Transverse colon (tissue), 4 donors: ENCODE measurements at regions of chr19 and their contacts with region 1.

Region 1: DNA sequence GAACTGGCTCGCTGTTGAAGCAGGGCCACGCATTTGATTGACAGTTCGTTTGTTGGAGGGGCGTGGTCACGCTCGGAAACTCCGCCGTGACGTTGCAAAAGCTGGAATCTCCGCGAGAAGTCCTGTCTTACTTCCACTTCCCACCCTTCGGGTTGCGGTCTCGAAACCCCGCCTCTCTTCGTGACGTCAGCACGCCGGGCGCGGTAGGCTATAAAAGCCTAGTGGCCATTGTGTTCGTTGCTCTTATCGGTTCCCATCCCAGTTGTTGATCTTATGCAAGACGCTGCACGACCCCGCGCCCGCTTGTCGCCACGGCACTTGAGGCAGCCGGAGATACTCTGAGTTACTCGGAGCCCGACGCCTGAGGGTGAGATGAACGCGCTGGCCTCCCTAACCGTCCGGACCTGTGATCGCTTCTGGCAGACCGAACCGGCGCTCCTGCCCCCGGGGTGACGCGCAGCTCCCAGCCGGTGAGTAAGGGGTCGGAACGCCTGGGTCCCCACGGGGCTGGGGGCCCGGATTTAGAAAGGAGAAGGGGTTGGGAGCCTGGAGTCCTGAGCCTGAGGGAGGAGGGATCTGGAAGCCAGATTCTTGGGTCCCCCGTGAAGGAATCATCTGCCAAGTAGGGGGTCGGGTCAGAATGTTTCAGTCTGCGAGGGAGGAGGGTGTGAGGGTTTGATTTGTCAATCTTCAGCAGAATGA is at the start of gene PPP1R15A:
- DNase-seq: peak; percentile 99
- H3K4me3 ChIP-seq: peak within 1 kb of the TSS; percentile 75 to 98 (median 88)
- H3K27ac ChIP-seq: peak within 1 kb of the TSS; percentile 100
- H3K4me1 ChIP-seq: peaks cover 24 to 60% (median 47%) of the 10 kb centered on the region in 4 donors
- H3K27me3 ChIP-seq: no peaks in the 10 kb centered on the region
- CTCF ChIP-seq: peak in 2 of 5 experiments; percentile 54 to 64
- EP300 ChIP-seq: peak; percentile 68
- POLR2A ChIP-seq: peak; percentile 100
- total RNA-seq, gene PPP1R15A: 49.4 to 109 (median 69.5) TPM

Region 2: DNA sequence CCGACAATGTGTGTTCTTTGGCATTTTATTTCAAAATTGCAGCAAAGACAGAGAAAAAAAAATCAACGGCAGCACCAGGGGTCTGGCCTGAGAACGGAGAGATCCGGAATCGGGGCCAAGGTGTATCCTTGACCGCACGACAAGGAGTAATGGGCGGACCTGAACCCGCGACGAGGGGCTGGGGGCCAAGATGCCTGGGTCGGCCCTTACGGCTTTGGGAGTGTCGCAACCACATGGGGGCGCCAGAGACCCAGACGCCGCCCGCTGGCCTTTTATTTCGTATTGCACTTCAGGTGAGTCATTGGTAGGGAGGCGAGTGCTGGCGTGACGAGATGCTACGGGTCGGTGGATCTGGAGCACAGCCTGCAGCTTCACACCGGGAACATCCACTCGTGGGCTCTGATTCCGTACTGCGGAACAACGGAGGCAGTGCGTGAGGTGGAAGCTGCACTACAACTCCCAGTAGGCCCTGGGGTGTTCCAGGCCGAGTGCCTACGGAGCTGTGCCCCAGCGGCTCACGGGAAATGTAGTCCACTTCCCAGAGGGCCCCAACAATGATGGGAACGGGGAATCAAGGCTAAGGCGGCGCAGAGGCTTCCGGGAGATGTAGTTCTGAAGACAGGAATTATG is 77.2 kb before region 1 on chr19:
- in situ Hi-C with region 1: no loop called
- intact Hi-C with region 1: no loop called
- DNase-seq: peak; percentile 91
- H3K4me3 ChIP-seq: peak overlapping the region in 3 of 4 donors; percentile 24 to 56 (median 41)
- H3K27ac ChIP-seq: peak overlapping the region; percentile 72 to 88 (median 78)
- H3K4me1 ChIP-seq: peaks cover 0 to 15% (median 10%) of the 10 kb centered on the region in 4 donors
- H3K27me3 ChIP-seq: no peaks in the 10 kb centered on the region
- CTCF ChIP-seq: peak; percentile 92 to 99 (median 97)
- EP300 ChIP-seq: no peak
- POLR2A ChIP-seq: peak; percentile 24

Region 3: DNA sequence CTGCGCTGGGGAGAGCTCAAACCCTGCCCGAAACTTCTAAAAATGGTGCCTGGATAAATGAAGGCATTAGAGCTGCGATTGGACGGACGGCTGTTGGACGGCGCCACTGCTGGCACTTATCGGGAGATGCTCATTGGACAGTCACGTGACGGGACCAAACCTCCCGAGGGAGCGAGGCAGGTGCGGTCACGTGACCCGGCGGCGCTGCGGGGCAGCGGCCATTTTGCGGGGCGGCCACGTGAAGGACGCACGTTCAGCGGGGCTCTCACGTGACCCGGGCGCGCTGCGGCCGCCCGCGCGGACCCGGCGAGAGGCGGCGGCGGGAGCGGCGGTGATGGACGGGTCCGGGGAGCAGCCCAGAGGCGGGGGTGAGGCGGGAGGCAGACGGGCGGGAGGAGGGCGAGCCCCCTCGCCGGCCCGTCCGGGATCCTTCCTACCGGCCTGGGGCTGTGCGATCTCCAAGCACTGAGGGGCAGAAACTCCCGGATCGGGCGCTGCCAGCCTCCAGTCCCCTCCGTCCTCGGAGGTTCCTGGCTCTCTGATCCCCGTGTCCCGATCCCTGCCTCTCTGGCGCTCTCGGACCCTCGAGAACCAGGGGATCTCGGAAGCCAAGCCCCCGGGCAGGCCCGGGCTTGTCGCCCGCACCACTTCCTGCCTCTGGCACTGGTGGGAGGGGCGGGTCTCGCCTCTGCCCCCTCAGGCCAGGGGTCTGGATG is 82.4 kb after region 1 on chr19 and contains the start of gene BAX:
- in situ Hi-C with region 1: loop called in 2 of 4 experiments (anchors 10 to 25 kb)
- intact Hi-C with region 1: no loop called
- DNase-seq: peak; percentile 98
- H3K4me3 ChIP-seq: peak within 1 kb of the TSS; percentile 76 to 99 (median 94)
- H3K27ac ChIP-seq: peak within 1 kb of the TSS; percentile 87 to 93 (median 90)
- H3K4me1 ChIP-seq: peaks cover 7 to 17% (median 16%) of the 10 kb centered on the region in 4 donors
- H3K27me3 ChIP-seq: no peaks in the 10 kb centered on the region
- CTCF ChIP-seq: peak in 2 of 5 experiments; percentile 12 to 23
- EP300 ChIP-seq: no peak
- POLR2A ChIP-seq: peak; percentile 56
- total RNA-seq, gene BAX: 74.5 to 152 (median 112) TPM

Region 4: GRCh38 chr19:48982280-48982679 is 109.9 kb after region 1 on chr19:
- in situ Hi-C with region 1: no loop called
- intact Hi-C with region 1: no loop called
- DNase-seq: no peak
- H3K4me3 ChIP-seq: no peak overlapping the region
- H3K27ac ChIP-seq: no peak overlapping the region
- H3K4me1 ChIP-seq: peaks cover under 1 to 8% (median 4%) of the 10 kb centered on the region in 4 donors
- H3K27me3 ChIP-seq: no peaks in the 10 kb centered on the region
- CTCF ChIP-seq: no peak
- EP300 ChIP-seq: no peak
- POLR2A ChIP-seq: no peak

Region 5: GRCh38 chr19:49106648-49107135 is 234.4 kb after region 1 on chr19:
- in situ Hi-C with region 1: no loop called
- intact Hi-C with region 1: no loop called
- DNase-seq: peak; percentile 61
- H3K4me3 ChIP-seq: no peak overlapping the region
- H3K27ac ChIP-seq: no peak overlapping the region
- H3K4me1 ChIP-seq: peaks cover 0 to 4% (median 0%) of the 10 kb centered on the region in 4 donors
- H3K27me3 ChIP-seq: no peaks in the 10 kb centered on the region
- CTCF ChIP-seq: peak; percentile 71 to 82 (median 76)
- EP300 ChIP-seq: no peak
- POLR2A ChIP-seq: no peak

Region 6: DNA sequence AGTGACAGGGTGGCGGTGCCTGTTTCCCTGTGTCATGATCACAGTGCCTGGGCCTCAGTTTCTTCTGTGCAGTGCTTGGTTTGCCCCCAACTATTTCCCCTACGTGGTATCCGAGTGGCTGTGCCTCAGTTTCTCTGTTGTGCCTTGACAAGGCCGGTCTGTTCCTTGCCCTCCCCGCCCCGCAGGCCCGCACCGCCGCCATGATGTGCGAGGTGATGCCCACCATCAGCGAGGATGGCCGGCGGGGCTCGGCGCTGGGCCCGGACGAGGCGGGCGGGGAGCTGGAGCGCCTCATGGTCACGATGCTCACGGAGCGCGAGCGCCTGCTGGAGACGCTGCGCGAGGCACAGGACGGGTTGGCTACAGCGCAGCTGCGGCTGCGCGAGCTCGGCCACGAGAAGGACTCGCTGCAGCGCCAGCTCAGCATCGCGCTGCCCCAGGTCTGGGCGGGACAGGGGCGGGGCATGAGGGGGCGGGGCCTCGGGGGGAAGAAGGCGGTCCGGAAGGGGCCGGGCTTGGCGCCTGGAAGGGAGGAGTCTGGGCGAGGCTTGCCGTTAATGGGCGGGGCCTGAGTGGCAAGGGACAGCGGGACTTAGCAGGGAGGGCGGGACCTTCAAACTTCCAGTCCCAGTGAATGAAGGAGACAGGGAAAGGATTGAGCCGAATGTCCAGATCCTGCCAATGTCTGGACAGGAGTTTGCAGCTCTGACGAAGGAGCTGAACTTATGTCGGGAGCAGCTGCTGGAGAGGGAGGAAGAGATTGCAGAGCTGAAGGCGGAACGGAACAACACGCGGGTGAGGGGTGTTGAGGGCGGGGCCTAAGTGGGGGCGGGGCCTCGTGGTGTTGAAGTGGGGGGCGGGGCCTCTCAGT is 255.6 kb after region 1 on chr19:
- in situ Hi-C with region 1: no loop called
- intact Hi-C with region 1: no loop called
- DNase-seq: peak; percentile 98
- H3K4me3 ChIP-seq: peak overlapping the region in 3 of 4 donors; percentile 11 to 41 (median 21)
- H3K27ac ChIP-seq: peak overlapping the region; percentile 65 to 78 (median 76)
- H3K4me1 ChIP-seq: peaks cover 6 to 34% (median 16%) of the 10 kb centered on the region in 4 donors
- H3K27me3 ChIP-seq: no peaks in the 10 kb centered on the region
- CTCF ChIP-seq: peak in 4 of 5 experiments; percentile 14 to 58 (median 29)
- EP300 ChIP-seq: no peak
- POLR2A ChIP-seq: no peak